ENCODE measurements at regions of chr18 and their contacts with region 1.

Region 1: DNA sequence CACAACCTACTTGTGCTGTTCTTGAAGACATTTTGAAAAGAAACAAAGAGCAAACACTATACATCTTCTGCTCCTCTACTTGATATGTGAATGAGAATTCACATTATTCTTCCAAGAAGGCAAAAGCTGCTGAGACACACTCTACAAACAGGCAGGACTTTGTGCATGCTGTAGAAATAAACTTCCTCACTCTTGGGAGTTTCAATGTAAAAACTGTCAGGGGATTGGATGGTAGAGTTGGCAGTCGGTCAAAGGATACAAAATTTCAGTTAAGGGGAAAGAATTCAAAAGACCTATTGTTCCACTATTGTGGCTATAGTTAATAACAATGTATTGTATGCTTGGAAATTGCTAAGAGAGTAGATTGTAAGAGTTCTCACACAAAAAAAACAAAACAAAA is 196.3 kb downstream of the MC4R start:
- DNase-seq: no peak

Region 2: GRCh38 chr18:60232541-60232940 is 56.3 kb after region 1 on chr18:
- intact Hi-C with region 1: loop called (anchors 10 kb)
- DNase-seq: no peak

Measured in cardiac septum (tissue), 1 donor.